ENCODE measurements at regions of chr9 and their contacts with region 1.

Region 1: DNA sequence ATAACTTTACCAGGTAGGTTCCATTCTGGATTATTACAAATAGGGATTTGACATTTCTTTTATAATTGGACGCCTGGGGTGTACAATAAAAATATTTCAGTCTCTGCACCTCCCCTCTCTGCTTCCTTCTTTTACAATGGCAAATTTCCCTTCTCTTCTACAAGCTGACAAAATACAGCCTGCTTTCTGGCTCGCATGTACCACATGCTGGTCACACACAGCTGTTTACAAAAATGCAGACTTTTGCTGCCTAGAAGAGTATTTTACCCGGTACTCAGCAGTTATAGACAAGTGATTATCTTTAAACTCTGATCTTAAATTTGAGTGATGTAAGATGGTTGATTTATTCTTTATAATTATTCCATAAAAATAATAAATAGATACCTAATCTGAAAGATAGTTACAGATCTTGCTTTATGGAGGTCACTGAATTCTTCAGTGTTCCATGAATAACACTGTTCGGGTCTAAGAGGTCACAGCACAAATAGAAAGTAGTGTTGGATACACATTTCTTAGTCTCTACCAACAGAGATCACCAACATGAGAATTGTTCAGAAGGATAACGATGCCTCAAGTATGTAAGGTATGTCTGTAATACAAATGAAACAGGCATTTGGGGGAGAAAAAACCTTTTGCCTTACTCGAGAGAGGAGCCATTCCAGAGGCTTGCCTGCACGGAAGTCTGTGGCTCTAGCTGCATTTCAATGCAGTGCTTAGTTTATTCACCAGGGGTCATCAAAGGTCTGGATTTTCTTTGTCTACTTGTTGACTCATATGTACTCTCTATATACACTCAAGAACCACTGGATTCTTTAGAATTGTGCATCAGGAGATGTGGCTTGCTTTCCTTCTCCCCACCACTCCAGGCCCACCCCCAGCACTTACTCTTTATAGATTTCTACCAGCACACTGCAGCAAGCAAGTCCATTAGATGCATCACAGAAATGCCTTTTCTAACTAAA is 206.6 kb upstream of the RFX3 start:
- DNase-seq: no peak

Region 2: DNA sequence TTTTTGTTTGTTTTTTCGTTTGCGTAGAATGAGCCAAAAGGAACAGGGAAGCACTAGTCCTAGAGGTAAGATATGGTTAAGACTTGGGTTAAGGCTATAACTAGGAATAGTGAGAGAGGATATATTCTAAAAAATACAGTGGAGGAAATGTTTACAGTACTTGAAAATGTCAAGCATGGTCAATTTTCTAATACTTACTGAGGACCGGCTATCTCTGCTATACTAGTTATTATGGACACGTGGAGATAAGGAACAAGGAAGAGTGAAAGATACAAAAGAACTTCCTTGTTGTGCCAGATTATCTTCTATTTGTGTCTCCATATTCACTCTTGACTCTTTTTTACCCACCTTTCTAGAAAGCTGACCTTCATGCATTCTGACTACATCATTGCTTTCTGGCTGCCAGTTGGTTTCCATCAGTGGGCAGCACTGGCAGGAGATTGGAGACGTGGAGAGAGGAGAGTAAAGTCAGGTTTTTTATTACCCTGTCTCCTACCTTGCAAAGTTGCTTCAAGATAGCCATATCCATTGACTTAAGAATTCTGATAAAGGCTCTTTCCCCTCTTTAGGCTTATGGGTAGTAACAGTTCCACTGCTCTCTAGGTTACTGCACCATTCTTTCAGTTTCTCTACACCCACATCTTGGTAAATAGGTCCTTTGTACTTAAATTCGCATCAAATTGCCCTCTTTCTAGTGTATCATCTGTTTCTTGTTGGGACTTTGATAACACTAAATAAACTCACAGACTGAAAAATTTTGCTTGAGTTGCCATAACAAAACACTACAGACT is 197.5 kb before region 1 on chr9:
- intact Hi-C with region 1: loop called (anchors 5 kb)
- DNase-seq: no peak

Region 3: DNA sequence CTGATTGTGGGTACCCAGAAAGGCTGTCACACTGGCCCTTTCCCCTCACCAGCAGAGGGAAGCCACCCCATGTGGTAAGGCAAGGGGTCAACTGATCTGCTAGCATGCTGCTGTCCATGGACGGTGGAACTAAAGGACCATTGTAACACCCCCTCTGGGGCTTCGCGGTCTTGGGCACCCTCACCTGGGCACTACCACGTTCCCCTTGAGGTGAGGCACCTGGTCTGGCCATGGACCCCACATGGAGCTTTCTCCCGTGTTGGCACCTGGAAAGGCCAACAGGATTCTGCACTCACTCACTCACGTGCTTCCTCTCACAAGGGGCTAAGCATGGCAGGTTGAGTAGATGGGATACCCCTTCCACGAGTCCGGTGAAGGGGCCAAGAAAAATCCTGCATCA is 134.6 kb before region 1 on chr9:
- intact Hi-C with region 1: no loop called
- DNase-seq: no peak

Region 4: DNA sequence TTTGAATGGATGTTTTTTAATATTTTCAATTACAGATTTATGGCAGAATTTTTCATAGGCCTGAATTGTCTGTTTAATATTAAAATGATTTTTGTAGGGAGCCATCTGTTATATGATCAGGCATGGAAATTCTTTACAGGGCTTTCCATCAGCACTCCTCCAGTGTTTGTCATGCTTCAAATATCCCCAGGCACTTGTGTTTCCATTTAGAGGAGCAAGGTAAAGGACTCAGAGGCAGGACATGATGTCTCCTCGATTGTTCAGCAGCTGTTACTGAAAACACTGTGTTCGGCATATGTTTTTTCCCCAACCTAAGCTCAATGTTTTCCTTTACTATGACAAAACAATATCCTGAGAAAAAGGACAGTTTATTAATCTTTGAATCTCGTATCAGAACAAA is 34.3 kb before region 1 on chr9:
- intact Hi-C with region 1: no loop called
- DNase-seq: no peak

Region 5: GRCh38 chr9:3760031-3760430 is 27.7 kb after region 1 on chr9:
- intact Hi-C with region 1: no loop called
- DNase-seq: no peak

Region 6: DNA sequence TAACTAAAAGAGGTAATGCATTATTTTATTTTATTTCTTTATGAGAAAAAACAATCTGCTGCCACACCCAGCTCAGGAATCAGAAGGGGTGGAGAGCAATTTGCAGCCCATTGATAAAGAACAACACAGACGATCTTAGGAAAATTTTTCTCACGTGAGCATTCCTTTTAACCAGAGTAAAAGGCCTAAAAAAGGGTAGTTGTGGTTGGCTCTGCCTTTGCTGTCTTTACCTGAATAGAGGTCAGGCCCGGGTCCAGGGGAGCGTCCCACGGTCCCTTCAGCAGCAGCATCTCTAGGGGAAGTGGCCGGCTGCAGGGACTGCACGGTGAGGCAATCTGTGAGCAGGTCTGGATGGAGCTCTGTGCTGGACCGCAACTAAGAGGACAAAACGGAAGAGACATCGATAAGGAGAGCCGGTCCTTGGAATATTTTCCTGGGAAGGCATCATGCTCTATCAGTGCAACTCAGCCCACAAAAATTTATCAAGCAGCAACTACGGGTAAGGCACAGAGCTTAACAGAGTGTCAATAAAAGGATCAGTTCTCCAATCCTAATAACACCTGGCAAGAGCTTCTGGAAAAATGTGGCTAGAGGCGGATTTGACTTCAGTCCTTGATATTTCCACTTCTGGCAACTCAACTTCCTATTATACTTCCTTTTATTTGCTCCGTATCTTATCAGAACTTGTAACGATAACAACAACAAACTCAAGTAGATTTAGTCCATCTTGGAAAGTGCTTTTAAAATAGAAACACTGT is 166.3 kb after region 1 on chr9:
- intact Hi-C with region 1: no loop called
- DNase-seq: no peak

Region 7: DNA sequence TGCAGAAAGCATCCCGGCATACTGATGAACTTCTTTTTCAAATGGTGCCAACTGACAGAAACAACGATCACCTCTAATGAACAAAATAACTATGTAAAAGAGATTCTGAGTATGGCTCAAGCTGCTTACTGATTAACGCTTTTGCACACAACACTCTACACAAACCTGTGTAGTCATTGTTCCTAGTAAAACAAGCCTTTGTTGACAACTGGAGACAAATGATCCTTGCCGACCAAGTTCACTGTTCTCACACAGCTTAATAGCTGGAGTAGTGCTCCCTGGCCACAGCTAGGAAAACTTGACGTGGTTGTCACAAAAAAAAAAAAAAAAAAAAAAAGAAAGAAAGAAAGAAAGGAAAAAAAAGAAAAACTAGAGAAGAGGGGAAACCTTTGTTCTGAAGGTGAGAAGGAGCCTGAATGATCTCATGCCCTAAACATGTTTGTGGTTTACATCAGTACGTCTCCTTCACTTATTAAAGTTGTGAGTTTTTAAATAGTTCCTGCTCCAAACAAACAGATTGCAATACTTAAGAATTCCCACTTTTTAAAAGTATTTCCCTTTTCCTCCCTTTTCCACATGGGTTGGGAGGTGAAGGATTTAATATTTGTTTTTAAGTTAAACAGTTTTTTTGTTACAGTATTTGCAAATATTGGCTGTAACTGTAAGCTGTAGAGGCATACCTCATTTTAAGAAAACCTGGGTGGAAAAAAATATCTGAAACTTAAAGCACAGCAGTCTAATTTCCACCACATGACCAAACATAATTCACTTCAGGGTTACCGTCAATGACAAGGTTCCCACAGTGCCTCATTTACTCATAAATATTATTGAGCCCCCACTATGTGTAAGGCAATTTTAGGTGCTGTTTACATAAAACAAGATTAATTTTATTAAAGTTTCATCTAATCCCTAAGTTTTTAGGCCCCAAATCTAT is 503.8 kb after region 1 on chr9:
- intact Hi-C with region 1: loop called (anchors 10 kb)
- DNase-seq: no peak

Region 8: DNA sequence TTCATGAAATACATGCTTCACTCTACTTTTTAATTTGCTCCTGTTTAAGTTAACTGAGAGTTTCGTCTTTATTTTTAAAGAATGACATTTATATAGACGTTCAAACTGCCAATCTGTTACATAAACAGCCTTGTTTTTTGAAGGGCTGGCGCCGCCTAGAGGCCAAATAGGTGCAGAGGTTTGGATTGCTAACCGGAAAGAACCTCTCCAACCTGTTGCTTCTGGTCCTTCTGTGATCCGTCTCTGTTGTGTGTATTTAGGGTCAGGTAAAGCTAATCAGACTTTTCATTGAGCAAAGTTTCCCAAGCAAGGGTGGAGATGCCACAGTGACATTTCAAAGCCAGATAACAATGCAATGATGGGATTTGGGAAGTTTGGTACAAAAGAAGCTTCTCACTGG is 607.0 kb after region 1 on chr9:
- intact Hi-C with region 1: loop called (anchors 5 kb)
- DNase-seq: no peak

Measured in cardiac septum (tissue), 1 donor.